GM12878 (cell line): ENCODE measurements at regions of chr11 and their contacts with region 1.

Region 1: GRCh38 chr11:18012863-18013781 is at the start of gene SERGEF:
- DNase-seq: peak; percentile 75
- ATAC-seq: peak; percentile 94
- H3K4me3 ChIP-seq: peak within 1 kb of the TSS; percentile 88
- H3K27ac ChIP-seq: peak within 1 kb of the TSS; percentile 78
- H3K4me1 ChIP-seq: peaks cover 23% of the 10 kb centered on the region
- H3K27me3 ChIP-seq: no peaks in the 10 kb centered on the region
- CTCF ChIP-seq: 0 out of 6 replicates have a peak, but pooled peaks of 2 of the 3 experiments have one; percentile 0 to 2
- EP300 ChIP-seq: no peak
- POLR2A ChIP-seq: peak; percentile 86
- RAD21 ChIP-seq: no peak
- polyA plus RNA-seq, gene SERGEF: 14.6 to 25.6 TPM

Region 2: DNA sequence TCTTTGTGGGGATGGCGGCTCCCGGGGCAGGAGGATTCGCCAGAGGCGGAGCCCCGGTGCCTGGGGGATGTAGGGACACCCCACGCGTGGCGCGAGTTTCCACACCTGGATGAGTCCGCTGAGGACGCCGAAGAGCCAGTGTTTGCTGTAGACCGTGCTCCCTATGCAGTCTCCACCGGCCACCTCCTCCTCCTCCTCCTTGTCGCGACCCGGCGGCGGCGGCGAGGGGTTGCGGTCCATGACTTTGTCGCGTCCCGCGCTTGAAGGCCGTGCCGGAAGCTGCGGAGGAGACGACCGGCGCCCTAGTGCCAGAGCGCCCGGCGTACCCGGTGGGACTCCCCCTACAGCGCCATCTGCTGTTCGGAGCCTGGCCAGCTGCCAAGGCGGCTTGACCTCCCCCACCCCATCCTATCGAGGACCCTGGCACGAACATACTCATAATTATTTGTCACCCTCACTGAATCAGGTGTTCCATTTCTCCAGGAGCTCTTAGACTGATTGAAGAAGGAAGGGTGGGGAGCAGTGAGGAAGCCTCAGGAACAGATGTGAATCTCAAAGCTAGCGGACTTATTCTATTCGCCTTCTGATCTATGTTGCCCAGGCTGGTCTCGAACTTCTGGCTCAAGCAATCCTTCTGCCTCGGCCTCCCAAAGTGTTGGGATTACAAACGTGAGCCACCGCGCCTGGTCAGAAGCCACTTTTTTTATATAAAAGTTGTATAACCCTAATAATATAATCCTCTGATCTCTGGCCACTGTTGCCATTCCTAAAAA is 92.9 kb after region 1 on chr11 and contains the start of gene SAAL1:
- CTCF ChIA-PET with region 1: interaction called, 15 read pairs
- POLR2A ChIA-PET with region 1: interaction called, 8 read pairs
- RAD21 ChIA-PET with region 1: interaction called, 10 read pairs
- SMC1A ChIA-PET with region 1: interaction called, 8 read pairs
- in situ Hi-C with region 1: no loop called
- intact Hi-C with region 1: loop called (anchors 2 kb)
- DNase-seq: peak; percentile 35
- ATAC-seq: peak; percentile 97
- H3K4me3 ChIP-seq: peak within 1 kb of the TSS; percentile 92
- H3K27ac ChIP-seq: peak within 1 kb of the TSS; percentile 68
- H3K4me1 ChIP-seq: peaks cover 4% of the 10 kb centered on the region; the same call in 1 of the 2 replicates
- H3K27me3 ChIP-seq: no peaks in the 10 kb centered on the region
- CTCF ChIP-seq: peak; percentile 83 to 85 (median 84)
- EP300 ChIP-seq: no peak
- POLR2A ChIP-seq: peak; percentile 92
- RAD21 ChIP-seq: peak; percentile 47; the same call in 1 of the 2 replicates
- polyA plus RNA-seq, gene SAAL1: 35.1 to 49.5 TPM